H1 (cell line): ENCODE measurements at regions of chr14 and their contacts with region 1.

Region 1: DNA sequence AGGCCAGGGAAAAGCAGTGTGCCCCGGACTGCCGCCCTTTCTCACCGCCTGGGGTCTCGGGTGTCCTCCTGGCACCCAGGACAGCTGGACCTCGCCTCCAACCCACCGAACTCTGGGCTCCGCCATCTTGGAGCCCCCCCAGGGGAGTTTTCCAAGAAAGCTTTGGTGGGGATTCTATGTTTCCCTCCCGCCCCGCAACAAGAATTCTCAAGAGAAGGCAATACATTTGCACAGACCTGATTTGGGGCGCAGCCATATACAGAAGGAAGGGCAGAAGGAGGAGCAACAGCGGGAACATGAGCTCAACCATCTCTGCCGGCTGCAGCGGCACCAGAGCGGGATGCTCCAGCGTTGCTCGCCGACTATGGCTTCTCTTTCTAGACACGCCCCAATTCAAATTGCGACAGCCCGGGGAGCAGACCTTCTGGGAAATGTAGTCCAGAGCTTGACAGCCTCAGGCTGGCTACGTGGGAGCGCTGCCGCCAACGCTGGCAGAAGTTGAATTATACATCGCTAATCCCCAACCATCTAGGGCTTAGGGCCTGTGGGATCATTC is at the start of gene RDH11:
- DNase-seq: peak; percentile 49 to 86
- H3K4me3 ChIP-seq: peak within 1 kb of the TSS; percentile 76 to 97 (median 87)
- H3K27ac ChIP-seq: peak within 1 kb of the TSS; percentile 73
- H3K4me1 ChIP-seq: peaks cover 3 to 5% (median 4%) of the 10 kb centered on the region in 4 experiments; a peak in 4 of 7 replicates
- H3K27me3 ChIP-seq: peaks cover 0 to 2% (median 0%) of the 10 kb centered on the region in 4 experiments; a peak in 2 of 7 replicates
- CTCF ChIP-seq: 0 out of 4 replicates have a peak, but pooled peaks of 1 of the 3 experiments have one; percentile 5
- EP300 ChIP-seq: no peak
- POLR2A ChIP-seq: peak; percentile 95 to 98
- RAD21 ChIP-seq: no peak
- total RNA-seq, gene RDH11: 104 and 112 TPM in 2 replicates

Region 2: GRCh38 chr14:67674481-67675169 is 20.8 kb before region 1 on chr14 and contains the start of gene VTI1B:
- CTCF ChIA-PET with region 1: interaction called, 3 read pairs
- POLR2A ChIA-PET with region 1: interaction called, 21 read pairs
- DNase-seq: peak in 1 of 2 experiments; percentile 89
- H3K4me3 ChIP-seq: peak within 1 kb of the TSS; percentile 77 to 96 (median 80)
- H3K27ac ChIP-seq: peak within 1 kb of the TSS; percentile 99
- H3K4me1 ChIP-seq: no peaks in the 10 kb centered on the region; a peak in 2 of 7 replicates
- H3K27me3 ChIP-seq: no peaks in the 10 kb centered on the region
- CTCF ChIP-seq: peak in 1 of 3 experiments; percentile 9; a peak in 1 of 4 replicates
- EP300 ChIP-seq: no peak
- POLR2A ChIP-seq: peak; percentile 63 to 83
- RAD21 ChIP-seq: no peak
- total RNA-seq, gene VTI1B: 98.7 and 104 TPM in 2 replicates

Region 3: DNA sequence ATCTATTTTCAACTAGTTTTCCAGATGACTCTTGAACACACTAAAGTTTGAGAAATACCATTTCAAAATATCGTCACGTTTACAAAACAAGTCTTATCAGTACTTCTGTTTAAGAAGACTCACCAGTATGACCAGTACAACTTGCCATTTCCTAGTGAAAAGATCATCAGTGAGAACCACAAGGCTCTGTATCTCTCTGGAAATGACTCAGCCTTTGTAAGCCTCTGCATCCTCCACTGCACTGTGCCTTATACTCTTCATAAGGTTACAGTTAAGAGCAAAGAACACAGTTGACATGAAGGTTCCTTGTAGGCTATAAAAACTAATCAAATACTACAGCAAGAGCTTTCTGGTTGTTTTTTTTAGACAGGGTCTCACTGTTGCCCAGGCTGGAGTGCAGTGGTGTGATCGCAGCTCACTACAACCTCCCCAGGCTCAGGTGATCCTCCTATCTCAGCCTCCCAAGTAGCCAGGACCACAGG is 15.3 kb before region 1 on chr14:
- CTCF ChIA-PET with region 1: interaction called, 4 read pairs
- POLR2A ChIA-PET with region 1: interaction called, 21 read pairs
- DNase-seq: no peak
- H3K4me3 ChIP-seq: no peak overlapping the region
- H3K27ac ChIP-seq: no peak overlapping the region
- H3K4me1 ChIP-seq: no peaks in the 10 kb centered on the region; a peak in 2 of 7 replicates
- H3K27me3 ChIP-seq: no peaks in the 10 kb centered on the region; a peak in 1 of 7 replicates
- CTCF ChIP-seq: no peak
- EP300 ChIP-seq: no peak
- POLR2A ChIP-seq: no peak
- RAD21 ChIP-seq: no peak

Region 4: GRCh38 chr14:67729072-67729885 is 33.8 kb after region 1 on chr14:
- CTCF ChIA-PET with region 1: no interaction called
- POLR2A ChIA-PET with region 1: interaction called, 20 read pairs
- DNase-seq: peak; percentile 51 to 77
- H3K4me3 ChIP-seq: peak overlapping the region in 3 of 4 experiments; percentile 13 to 37 (median 19); a peak in 4 of 8 replicates
- H3K27ac ChIP-seq: no peak overlapping the region
- H3K4me1 ChIP-seq: peaks cover 1 to 11% (median 6%) of the 10 kb centered on the region in 4 experiments; a peak in 5 of 7 replicates
- H3K27me3 ChIP-seq: no peaks in the 10 kb centered on the region; a peak in 1 of 7 replicates
- CTCF ChIP-seq: no peak
- EP300 ChIP-seq: no peak
- POLR2A ChIP-seq: peak in 1 of 2 experiments; percentile 66; a peak in 2 of 3 replicates
- RAD21 ChIP-seq: 0 out of 4 replicates have a peak, but pooled peaks of 1 of the 2 experiments have one; percentile 9

Region 5: DNA sequence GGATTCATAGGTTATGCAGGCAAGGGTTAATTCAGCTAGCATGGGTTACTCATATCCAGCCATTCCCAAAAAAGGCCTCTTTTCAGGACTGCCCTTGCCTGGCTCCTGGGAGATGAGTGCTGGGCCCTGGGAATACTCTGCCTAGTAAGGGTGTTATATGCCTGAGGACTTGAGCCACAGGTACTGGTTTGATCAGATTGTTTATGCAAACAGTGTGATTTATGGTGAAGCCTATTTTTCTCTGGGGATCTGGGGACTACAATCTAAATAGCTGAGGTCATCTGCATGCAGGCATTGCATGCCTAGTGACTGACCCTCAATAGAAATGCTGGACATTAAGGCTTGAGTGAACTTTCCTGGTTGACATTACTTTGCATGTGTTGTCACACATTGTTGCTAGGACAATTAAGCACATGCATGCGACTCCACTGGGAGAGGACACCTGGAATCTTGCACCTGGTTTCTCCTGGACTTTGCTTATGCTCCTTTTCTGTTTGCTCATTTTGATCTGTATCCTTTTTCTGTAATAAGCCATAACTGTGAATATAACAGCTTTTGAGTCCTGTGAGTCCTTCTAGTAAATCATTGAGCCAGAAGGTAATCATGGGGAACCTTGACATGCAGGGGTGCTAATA is 197.1 kb after region 1 on chr14:
- CTCF ChIA-PET with region 1: no interaction called
- POLR2A ChIA-PET with region 1: no interaction called
- DNase-seq: no peak
- H3K4me3 ChIP-seq: no peak overlapping the region
- H3K27ac ChIP-seq: no peak overlapping the region
- H3K4me1 ChIP-seq: no peaks in the 10 kb centered on the region
- H3K27me3 ChIP-seq: no peaks in the 10 kb centered on the region
- CTCF ChIP-seq: no peak
- EP300 ChIP-seq: no peak
- POLR2A ChIP-seq: no peak
- RAD21 ChIP-seq: no peak

Region 6: GRCh38 chr14:67908052-67908754 is 212.7 kb after region 1 on chr14:
- CTCF ChIA-PET with region 1: no interaction called
- POLR2A ChIA-PET with region 1: no interaction called
- DNase-seq: no peak
- H3K4me3 ChIP-seq: no peak overlapping the region
- H3K27ac ChIP-seq: no peak overlapping the region
- H3K4me1 ChIP-seq: no peaks in the 10 kb centered on the region
- H3K27me3 ChIP-seq: no peaks in the 10 kb centered on the region
- CTCF ChIP-seq: no peak
- EP300 ChIP-seq: no peak
- POLR2A ChIP-seq: no peak
- RAD21 ChIP-seq: no peak